Posterior vena cava (tissue), 2 donors: ENCODE measurements at regions of chr2 and their contacts with region 1.

Region 1: DNA sequence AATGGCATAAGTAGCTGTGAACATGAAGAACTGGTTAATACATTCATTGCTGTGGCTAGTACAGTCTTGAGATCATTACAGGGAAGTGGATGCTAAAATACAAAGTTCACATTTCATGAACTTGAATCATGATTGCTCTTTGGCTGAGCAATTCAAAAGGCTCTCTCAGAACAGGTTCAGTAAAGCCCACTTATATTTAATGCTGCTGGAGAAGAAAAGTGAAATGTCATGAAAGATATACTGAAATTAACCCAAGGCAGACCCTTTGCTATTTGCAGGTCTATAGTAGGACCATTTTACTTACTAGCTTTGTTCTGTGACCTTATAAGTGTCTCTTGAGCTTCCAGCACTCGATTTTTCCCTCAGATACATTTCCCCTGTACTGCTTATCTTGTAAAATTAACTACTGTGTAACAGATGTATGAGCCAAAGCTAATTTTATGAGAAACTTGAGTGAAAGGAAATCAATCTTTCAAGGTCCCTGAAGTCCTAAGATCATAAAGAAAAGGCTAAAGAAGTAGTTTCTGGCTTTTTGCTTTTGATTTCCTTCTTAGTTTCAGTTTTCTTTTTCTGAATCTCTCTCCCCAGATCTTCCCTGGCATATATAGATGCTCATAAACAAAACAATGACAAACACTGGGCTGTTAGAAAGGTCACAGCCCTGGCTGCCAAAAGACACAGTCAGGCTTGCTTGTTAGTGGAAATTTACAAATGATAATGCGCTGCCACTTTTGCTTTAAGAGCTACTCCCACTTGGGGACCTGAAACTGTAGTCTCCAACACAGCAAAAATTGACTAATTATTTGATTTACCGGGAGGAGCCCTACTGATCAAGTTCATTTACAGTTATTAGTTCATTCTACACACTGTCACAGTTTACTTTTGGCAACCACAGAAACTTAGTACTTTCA is 132.7 kb upstream of the XPO1 start:
- DNase-seq: no peak

Region 2: GRCh38 chr2:61117534-61117933 is 553.3 kb before region 1 on chr2:
- intact Hi-C with region 1: no loop called
- DNase-seq: no peak

Region 3: GRCh38 chr2:61688378-61689334 is 17.8 kb after region 1 on chr2:
- intact Hi-C with region 1: loop called in 1 of 2 experiments (anchors 1 kb)
- DNase-seq: no peak